CD4-positive, alpha-beta memory T cell (primary cell): ENCODE measurements at regions of chr12 and their contacts with region 1.

Region 1: DNA sequence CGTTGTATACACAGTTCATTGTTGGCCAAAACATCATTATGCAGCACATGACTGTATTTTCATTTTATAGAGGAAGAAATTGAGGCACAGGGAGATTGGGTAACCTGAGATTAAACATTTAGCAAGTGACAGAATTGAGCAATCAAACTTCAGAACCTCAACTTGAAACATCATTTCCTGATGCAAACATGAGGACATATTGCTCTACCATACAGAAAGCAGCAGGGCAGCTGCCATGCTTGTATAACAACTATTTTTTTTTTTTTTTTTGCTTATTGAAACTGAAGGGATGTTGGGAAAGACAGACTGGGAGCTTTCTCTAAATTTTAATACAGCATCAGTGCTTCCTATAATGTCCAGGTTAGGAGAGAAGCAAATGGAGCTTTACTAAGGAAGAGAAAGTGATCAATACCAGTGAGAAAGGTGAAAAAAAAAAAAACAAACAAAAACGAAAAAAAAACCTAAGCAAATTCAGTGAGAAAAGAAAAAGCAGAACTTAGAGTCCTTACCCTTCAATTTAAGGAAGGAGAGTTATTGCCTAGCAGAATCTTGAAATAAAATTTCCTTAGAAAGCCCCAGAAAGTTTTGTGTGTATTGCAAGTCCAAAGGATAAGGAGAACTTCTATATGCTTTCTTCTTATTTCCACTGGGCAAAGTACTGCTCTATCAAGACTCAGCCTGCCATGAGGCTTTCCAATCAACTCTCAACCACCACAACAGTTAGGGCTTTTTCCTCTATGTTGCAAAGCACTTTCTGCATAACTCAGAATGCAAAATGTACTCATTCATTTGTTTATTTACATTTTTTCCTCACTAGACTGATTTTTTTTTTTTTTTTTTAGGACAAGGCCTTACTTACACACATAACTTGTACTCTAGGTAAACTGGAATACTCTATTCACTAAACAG is 21.6 kb downstream of the BTG1 start:
- DNase-seq: no peak
- H3K4me3 ChIP-seq: no peak overlapping the region
- H3K4me3 Mint-ChIP-seq: peak overlapping the region in 2 of 8 donors; percentile 2 to 43
- H3K27ac ChIP-seq: no peak overlapping the region
- H3K27ac Mint-ChIP-seq: peak overlapping the region in 4 of 7 donors; percentile 10 to 83 (median 48)
- H3K4me1 ChIP-seq: peaks cover 36% of the 10 kb centered on the region
- H3K4me1 Mint-ChIP-seq: peaks cover 29 to 65% (median 43%) of the 10 kb centered on the region in 4 donors
- H3K27me3 ChIP-seq: no peaks in the 10 kb centered on the region
- H3K27me3 Mint-ChIP-seq: no peaks in the 10 kb centered on the region

Region 2: DNA sequence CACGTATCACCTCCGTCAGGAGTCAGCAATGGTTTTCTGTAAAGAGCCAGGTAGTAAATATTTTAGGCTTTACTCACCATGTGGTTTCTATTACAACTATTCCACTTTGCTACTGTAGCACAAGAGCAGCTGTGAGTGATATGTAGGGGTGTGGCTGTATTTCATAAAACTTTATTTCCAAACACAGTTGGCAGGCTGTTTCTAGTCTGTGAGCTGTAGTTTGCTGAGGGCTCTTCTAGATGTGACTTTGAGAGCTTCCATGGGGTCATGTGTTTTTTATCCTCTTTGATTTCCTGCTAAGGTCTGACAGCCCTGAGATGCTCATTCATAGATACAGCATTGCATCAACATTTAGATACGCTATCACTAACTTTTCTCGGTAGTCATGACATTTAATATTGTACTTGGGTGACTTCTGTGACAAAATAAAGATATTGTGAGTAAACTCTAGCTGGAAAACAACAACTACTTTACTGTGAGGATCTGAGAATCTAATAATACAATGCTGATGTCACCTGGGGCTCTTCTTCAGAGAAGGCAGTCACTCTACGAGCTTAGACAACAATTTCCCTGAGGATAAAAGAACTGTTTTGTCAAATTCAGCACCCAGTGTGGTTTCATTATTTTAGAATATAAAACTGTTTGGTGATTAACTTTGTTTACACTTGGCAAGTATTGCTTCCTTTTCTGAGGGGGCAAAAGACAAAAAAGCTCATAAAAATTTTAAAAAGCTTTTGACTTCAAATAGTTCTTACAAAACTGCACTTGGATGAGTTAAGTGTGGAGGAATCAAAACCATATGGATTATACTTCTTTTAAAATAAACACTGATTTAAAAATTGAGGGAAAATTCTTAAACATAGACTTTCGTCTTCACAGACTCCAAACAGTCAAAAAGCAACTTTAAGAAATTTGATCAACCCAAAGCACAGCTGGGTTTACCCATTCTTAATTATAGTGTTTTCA is 710.2 kb before region 1 on chr12:
- CTCF ChIA-PET with region 1: no interaction called
- POLR2A ChIA-PET with region 1: no interaction called
- intact Hi-C with region 1: no loop called
- DNase-seq: no peak
- H3K4me3 ChIP-seq: no peak overlapping the region
- H3K4me3 Mint-ChIP-seq: no peak overlapping the region
- H3K27ac ChIP-seq: no peak overlapping the region
- H3K27ac Mint-ChIP-seq: no peak overlapping the region
- H3K4me1 ChIP-seq: no peaks in the 10 kb centered on the region
- H3K4me1 Mint-ChIP-seq: no peaks in the 10 kb centered on the region
- H3K27me3 ChIP-seq: no peaks in the 10 kb centered on the region
- H3K27me3 Mint-ChIP-seq: peaks cover 5 to 7% of the 10 kb centered on the region in 2 donors

Region 3: GRCh38 chr12:92108651-92109050 is 15.4 kb before region 1 on chr12:
- CTCF ChIA-PET with region 1: interaction called, 3 read pairs
- POLR2A ChIA-PET with region 1: interaction called, 5 read pairs
- intact Hi-C with region 1: loop called (anchors 1 kb)
- DNase-seq: no peak
- H3K4me3 ChIP-seq: no peak overlapping the region
- H3K4me3 Mint-ChIP-seq: peak overlapping the region in 1 of 8 donors; percentile 42
- H3K27ac ChIP-seq: no peak overlapping the region
- H3K27ac Mint-ChIP-seq: peak overlapping the region in 2 of 7 donors; percentile 2 to 5
- H3K4me1 ChIP-seq: peaks cover 51% of the 10 kb centered on the region
- H3K4me1 Mint-ChIP-seq: peaks cover 40 to 80% (median 60%) of the 10 kb centered on the region in 4 donors
- H3K27me3 ChIP-seq: no peaks in the 10 kb centered on the region
- H3K27me3 Mint-ChIP-seq: no peaks in the 10 kb centered on the region